ENCODE measurements at regions of chr14 and their contacts with region 1.

Region 1: DNA sequence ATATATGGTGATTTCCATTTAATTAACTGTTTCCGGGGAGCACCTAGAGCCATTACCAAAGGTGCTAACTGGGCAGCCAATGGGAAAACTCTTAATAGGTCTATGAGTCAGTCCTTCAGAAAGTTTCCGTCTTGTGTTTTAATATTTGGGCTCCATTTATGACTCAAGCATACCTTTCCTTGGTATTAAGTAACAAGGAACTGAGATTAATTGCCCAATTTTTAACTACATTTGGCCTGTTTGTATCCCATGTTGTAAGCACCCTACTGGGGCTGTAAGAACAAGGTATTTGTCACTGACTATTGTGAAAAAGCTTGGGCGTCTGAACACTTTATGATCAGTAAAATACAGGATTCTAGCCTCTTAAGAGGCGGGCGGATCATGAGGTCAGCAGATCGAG is 62.8 kb upstream of the FOXN3 start:
- DNase-seq: no peak
- H3K4me3 ChIP-seq: no peak overlapping the region
- H3K27ac ChIP-seq: no peak overlapping the region
- H3K4me1 ChIP-seq: peaks cover 0 to 7% of the 10 kb centered on the region in 2 donors
- H3K27me3 ChIP-seq: no peaks in the 10 kb centered on the region
- CTCF ChIP-seq: no peak

Region 2: GRCh38 chr14:89425931-89426330 is 53.9 kb before region 1 on chr14:
- intact Hi-C with region 1: loop called (anchors 5 kb)
- DNase-seq: peak in 1 of 2 donors; percentile 74
- H3K4me3 ChIP-seq: no peak overlapping the region
- H3K27ac ChIP-seq: peak overlapping the region; percentile 86 to 97
- H3K4me1 ChIP-seq: peaks cover 14 to 36% of the 10 kb centered on the region in 2 donors
- H3K27me3 ChIP-seq: no peaks in the 10 kb centered on the region
- CTCF ChIP-seq: no peak

Region 3: DNA sequence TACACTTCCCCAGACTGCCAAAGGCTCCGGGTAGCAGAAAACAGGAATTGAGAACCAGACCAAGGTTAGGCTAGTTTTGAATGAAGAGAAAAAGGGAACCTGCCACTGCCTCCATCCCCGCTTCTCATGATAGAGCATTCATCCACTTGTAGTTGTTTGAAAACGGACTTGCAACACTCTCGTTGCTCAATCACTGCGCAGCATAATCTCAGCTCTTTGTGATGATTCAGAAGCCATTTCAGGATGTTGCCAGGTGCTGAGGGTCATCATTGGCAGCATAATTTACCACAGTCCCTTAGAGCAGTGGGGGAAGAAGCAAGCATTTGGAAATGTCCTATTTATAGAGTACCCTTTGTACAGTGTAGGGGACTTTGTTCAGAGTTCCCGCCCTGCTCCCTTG is 607.6 kb after region 1 on chr14:
- intact Hi-C with region 1: no loop called
- DNase-seq: peak; percentile 36 to 78
- H3K4me3 ChIP-seq: no peak overlapping the region
- H3K27ac ChIP-seq: no peak overlapping the region
- H3K4me1 ChIP-seq: no peaks in the 10 kb centered on the region
- H3K27me3 ChIP-seq: no peaks in the 10 kb centered on the region
- CTCF ChIP-seq: no peak

Measured in ascending aorta (tissue), 2 donors.